Panc1 (cell line): ENCODE measurements at regions of chr3 and their contacts with region 1.

Region 1: DNA sequence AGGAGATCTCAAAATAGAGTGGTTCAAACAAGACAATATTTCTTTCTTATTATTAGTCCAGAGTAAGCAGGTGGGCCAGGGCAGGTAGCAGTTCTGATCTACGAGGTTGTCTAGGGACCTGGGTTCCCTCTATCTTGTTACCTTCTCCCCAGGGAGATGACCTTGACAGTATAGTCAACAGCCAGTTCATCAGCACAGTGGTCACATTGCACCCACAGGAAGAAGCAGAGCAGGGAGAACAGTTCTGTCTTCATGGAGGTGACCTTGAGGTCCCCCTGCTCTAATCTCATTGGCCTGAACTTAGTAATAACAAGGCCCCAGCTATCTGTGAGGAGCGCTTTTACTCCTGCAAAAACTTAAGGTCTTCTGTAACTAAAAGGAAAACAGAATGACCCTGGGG is 21.7 kb downstream of the SLC49A4 start:
- DNase-seq: no peak
- ATAC-seq: no peak
- H3K4me3 ChIP-seq: no peak overlapping the region
- H3K27ac ChIP-seq: no peak overlapping the region
- H3K4me1 ChIP-seq: no peaks in the 10 kb centered on the region
- H3K27me3 ChIP-seq: no peaks in the 10 kb centered on the region
- CTCF ChIP-seq: no peak

Region 2: DNA sequence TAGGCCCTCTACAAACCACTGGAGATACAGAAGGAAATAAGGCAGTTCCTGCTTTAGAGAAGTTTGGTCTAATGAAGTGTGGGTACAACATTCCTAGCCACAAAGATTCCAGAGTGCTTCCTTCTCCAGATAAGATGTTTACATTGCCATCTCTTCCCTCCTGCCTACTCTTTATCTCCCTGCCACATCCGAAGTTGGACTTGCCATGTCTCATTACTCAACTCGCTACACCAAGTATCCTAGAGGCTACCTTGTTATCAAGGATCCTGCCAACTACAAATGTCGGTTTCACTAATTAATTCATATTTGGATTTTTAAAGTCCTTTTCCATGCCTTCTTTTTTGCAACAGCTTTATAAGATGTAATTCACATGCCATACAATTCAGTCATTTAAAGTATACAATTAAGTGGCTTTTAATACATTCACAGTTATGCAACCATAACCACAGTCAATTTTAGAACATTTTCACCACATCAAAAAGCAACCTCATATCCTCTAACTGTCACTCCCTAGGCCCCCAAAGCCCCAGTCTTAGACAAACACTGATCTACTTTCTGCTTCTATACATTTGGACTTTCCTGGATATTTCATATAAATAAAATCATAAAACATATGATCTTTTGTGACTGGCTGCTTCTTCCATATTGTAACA is 545.2 kb before region 1 on chr3:
- CTCF ChIA-PET with region 1: no interaction called
- POLR2A ChIA-PET with region 1: no interaction called
- in situ Hi-C with region 1: no loop called
- intact Hi-C with region 1: no loop called
- DNase-seq: no peak
- ATAC-seq: no peak
- H3K4me3 ChIP-seq: no peak overlapping the region
- H3K27ac ChIP-seq: no peak overlapping the region
- H3K4me1 ChIP-seq: no peaks in the 10 kb centered on the region
- H3K27me3 ChIP-seq: peaks cover 9% of the 10 kb centered on the region
- CTCF ChIP-seq: no peak

Region 3: DNA sequence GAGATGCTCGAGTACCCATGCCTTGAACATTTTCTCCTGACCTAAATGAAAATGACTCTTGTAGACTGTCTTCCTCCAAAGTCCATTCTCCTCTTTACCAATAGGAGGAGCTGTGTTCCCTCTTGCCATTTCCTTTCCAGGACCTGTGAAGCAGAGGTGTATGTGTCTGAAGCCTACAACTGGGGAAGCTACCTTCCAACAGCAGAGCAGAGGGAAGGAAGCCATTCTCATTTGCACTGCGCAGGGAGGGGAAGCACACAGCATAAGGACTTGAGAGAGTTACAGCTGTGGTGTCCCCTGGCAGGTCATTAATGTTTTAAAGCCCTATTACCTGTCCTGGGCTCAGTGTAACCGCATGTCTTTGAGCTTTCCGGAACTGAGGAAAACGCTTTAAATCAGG is 61.7 kb before region 1 on chr3:
- CTCF ChIA-PET with region 1: interaction called, 4 read pairs
- POLR2A ChIA-PET with region 1: interaction called, 20 read pairs
- in situ Hi-C with region 1: no loop called
- intact Hi-C with region 1: no loop called
- DNase-seq: peak; percentile 36
- ATAC-seq: peak; percentile 93
- H3K4me3 ChIP-seq: no peak overlapping the region
- H3K27ac ChIP-seq: no peak overlapping the region
- H3K4me1 ChIP-seq: no peaks in the 10 kb centered on the region
- H3K27me3 ChIP-seq: no peaks in the 10 kb centered on the region
- CTCF ChIP-seq: peak; percentile 90